ENCODE measurements at regions of chr2 and their contacts with region 1.

Region 1: GRCh38 chr2:27071277-27071989 is at the start of gene OST4:
- DNase-seq: peak; percentile 94
- H3K4me3 ChIP-seq: peak within 1 kb of the TSS; percentile 71 to 98
- H3K27ac ChIP-seq: peak within 1 kb of the TSS; percentile 86 to 93
- H3K4me1 ChIP-seq: no peaks in the 10 kb centered on the region
- H3K27me3 ChIP-seq: no peaks in the 10 kb centered on the region
- CTCF ChIP-seq: peak in 3 of 4 experiments; percentile 7 to 30 (median 29)
- POLR2A ChIP-seq: peak; percentile 81
- total RNA-seq, gene OST4: 246 to 317 TPM

Region 2: GRCh38 chr2:26345545-26346453 is 725.6 kb before region 1 on chr2 and contains the start of gene SELENOI:
- intact Hi-C with region 1: loop called (anchors 10 kb)
- DNase-seq: peak; percentile 99
- H3K4me3 ChIP-seq: peak within 1 kb of the TSS; percentile 87 to 95
- H3K27ac ChIP-seq: peak within 1 kb of the TSS; percentile 96 to 97
- H3K4me1 ChIP-seq: no peaks in the 10 kb centered on the region
- H3K27me3 ChIP-seq: no peaks in the 10 kb centered on the region
- CTCF ChIP-seq: no peak
- POLR2A ChIP-seq: peak; percentile 84
- total RNA-seq, gene SELENOI: 14.4 to 15.6 TPM

Measured in prostate gland (tissue), 2 donors.